ENCODE measurements at regions of chr2 and their contacts with region 1.

Region 1: DNA sequence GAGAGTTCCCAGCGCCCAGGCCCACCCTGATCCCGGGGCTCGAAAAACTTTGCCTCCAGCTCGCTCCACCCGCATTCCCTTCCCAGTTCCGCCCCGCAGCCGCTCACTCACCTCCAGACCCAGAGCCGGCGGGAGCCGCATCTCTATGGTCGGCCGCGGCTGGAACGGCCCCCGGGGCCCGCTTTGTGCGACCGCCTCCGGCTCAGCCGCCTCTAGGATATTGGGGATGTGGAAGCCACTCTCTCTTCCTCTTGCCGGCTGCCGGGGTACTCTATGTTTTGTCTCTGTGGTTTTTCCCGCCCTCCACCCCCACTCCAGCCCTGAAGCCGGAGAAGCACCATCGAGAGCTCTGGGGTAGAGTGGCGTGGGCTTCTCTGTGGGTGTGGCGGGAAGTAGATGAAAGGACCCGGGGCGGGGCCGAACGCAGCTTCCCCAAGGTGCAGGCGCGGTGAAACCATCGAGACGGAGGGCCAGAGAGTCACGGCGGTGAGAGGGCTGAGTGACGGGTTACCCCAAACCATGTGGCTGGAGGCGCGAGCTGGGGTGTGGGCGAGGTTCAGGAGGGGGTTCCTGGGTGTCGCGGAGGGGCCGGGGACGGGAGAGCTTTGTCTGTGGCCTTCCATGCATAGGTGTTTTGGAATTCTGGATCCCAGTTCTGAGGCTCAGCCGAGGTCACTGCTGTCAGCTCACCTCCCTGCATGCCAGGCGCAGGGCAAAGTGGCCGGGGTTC is at the starts of genes BCS1L and ZNF142:
- DNase-seq: peak; percentile 76
- ATAC-seq: peak; percentile 96
- H3K4me3 ChIP-seq: peak within 1 kb of the TSS; percentile 76
- H3K27ac ChIP-seq: peak within 1 kb of the TSS; percentile 46
- H3K4me1 ChIP-seq: peaks cover 3% of the 10 kb centered on the region; the same call in 1 of the 2 replicates
- H3K27me3 ChIP-seq: no peaks in the 10 kb centered on the region
- CTCF ChIP-seq: no peak
- POLR2A ChIP-seq: no peak
- RAD21 ChIP-seq: no peak
- total RNA-seq, gene BCS1L: 39.1 and 39.2 TPM in 2 replicates
- total RNA-seq, gene ZNF142: 3.3 and 4.3 TPM in 2 replicates

Region 2: GRCh38 chr2:218406209-218406948 is 253.0 kb before region 1 on chr2:
- CTCF ChIA-PET with region 1: no interaction called
- POLR2A ChIA-PET with region 1: interaction called, 9 read pairs
- dilution Hi-C with region 1: no loop called
- in situ Hi-C with region 1: loop called (anchors 10 kb)
- intact Hi-C with region 1: no loop called
- DNase-seq: peak; percentile 89
- ATAC-seq: peak; percentile 93
- H3K4me3 ChIP-seq: peak overlapping the region; percentile 44
- H3K27ac ChIP-seq: peak overlapping the region; percentile 78
- H3K4me1 ChIP-seq: peaks cover 17% of the 10 kb centered on the region
- H3K27me3 ChIP-seq: no peaks in the 10 kb centered on the region
- CTCF ChIP-seq: peak; percentile 88
- POLR2A ChIP-seq: peak; percentile 42; the same call in 1 of the 2 replicates
- RAD21 ChIP-seq: peak; percentile 79

Region 3: DNA sequence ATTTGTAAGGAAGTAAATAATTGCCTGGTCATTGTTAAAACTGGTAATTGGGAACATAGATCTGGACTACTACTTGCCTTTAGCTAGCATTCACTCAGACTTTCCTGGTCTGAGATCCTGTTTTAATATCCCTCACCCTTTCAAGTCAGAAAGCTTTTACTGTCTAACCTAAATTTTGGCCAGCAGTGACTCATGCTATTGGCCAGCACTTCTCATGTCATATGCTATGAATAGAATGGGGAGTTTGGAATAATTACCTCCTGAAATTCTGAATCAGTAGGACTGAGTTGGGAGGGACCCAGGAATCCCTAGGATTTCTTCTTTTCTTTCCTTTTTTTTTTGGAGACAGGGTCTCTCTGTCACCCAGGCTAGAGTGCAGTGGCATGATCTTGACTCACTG is 31.8 kb after region 1 on chr2:
- CTCF ChIA-PET with region 1: interaction called, 3 read pairs
- POLR2A ChIA-PET with region 1: no interaction called
- dilution Hi-C with region 1: no loop called
- in situ Hi-C with region 1: no loop called
- intact Hi-C with region 1: loop called (anchors 1 kb)
- DNase-seq: peak; percentile 66
- ATAC-seq: peak; percentile 50; the same call in 1 of the 2 replicates
- H3K4me3 ChIP-seq: no peak overlapping the region
- H3K27ac ChIP-seq: no peak overlapping the region
- H3K4me1 ChIP-seq: peaks cover 3% of the 10 kb centered on the region; the same call in 1 of the 2 replicates
- H3K27me3 ChIP-seq: no peaks in the 10 kb centered on the region
- CTCF ChIP-seq: no peak
- POLR2A ChIP-seq: no peak
- RAD21 ChIP-seq: no peak

Region 4: GRCh38 chr2:218708086-218708485 is 48.7 kb after region 1 on chr2:
- CTCF ChIA-PET with region 1: no interaction called
- POLR2A ChIA-PET with region 1: no interaction called
- dilution Hi-C with region 1: no loop called
- in situ Hi-C with region 1: no loop called
- intact Hi-C with region 1: no loop called
- DNase-seq: no peak
- ATAC-seq: no peak
- H3K4me3 ChIP-seq: no peak overlapping the region
- H3K27ac ChIP-seq: no peak overlapping the region
- H3K4me1 ChIP-seq: peaks cover 3% of the 10 kb centered on the region; the same call in 1 of the 2 replicates
- H3K27me3 ChIP-seq: no peaks in the 10 kb centered on the region
- CTCF ChIP-seq: no peak
- POLR2A ChIP-seq: no peak
- RAD21 ChIP-seq: no peak

Measured in IMR-90 (cell line).